ENCODE measurements at regions of chr5 and their contacts with region 1.

Region 1: DNA sequence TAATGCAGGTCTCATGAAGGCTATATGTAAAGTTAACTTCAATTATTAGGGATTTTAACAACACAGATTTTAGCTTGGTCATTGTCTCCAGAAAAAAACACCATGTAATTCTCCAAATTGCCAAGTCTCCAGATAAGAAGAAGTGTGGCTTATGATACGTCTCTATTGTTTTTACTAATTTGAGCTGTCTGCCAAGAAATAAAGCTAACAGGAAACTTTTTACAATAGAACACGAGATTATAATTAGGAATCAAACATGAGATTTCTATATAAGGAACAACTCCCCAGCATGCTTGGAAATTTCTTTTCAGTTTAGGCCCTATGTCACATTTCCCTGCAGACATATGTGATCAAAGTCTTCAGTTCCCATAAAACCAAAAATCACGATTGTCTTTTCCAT is 142.7 kb downstream of the MCTP1 start:
- DNase-seq: no peak
- ATAC-seq: peak in 4 of 8 donors; percentile 53 to 78 (median 64)
- H3K4me3 ChIP-seq: no peak overlapping the region
- H3K27ac ChIP-seq: peak overlapping the region in 2 of 10 donors; percentile 28 to 76
- H3K4me1 ChIP-seq: peaks cover 0 to 22% (median 0%) of the 10 kb centered on the region in 9 donors
- H3K27me3 ChIP-seq: no peaks in the 10 kb centered on the region
- CTCF ChIP-seq: no peak

Region 2: GRCh38 chr5:95075111-95075510 is 67.0 kb before region 1 on chr5:
- intact Hi-C with region 1: loop called in 1 of 10 experiments (anchors 5 kb)
- DNase-seq: no peak
- ATAC-seq: no peak
- H3K4me3 ChIP-seq: no peak overlapping the region
- H3K27ac ChIP-seq: no peak overlapping the region
- H3K4me1 ChIP-seq: peaks cover 0 to 58% (median 4%) of the 10 kb centered on the region in 9 donors
- H3K27me3 ChIP-seq: no peaks in the 10 kb centered on the region
- CTCF ChIP-seq: no peak

Region 3: DNA sequence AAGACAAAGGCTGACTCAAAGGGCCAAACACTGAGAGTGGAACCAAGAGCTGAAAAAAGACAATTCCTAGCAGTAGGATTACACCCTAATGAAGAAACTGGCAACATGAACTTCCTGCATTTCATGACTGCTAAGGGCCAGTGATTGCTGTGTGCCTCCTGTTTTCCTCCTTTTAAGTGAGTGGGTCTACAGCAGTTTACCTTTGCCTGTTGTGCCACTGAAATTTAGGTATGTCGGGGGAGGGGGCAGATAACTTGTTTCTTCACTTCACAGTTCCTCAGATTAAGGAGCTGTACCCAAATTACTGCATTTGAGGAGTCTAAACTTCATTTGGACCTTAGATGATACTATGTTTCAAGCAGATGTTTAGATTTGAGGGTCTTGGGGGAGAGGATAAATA is 48.9 kb before region 1 on chr5:
- intact Hi-C with region 1: no loop called
- DNase-seq: no peak
- ATAC-seq: no peak
- H3K4me3 ChIP-seq: no peak overlapping the region
- H3K27ac ChIP-seq: no peak overlapping the region
- H3K4me1 ChIP-seq: no peaks in the 10 kb centered on the region
- H3K27me3 ChIP-seq: no peaks in the 10 kb centered on the region
- CTCF ChIP-seq: no peak

Measured in heart right ventricle (tissue), 16 donors.